T-cell (primary cell): ENCODE measurements at regions of chr2 and their contacts with region 1.

Region 1: DNA sequence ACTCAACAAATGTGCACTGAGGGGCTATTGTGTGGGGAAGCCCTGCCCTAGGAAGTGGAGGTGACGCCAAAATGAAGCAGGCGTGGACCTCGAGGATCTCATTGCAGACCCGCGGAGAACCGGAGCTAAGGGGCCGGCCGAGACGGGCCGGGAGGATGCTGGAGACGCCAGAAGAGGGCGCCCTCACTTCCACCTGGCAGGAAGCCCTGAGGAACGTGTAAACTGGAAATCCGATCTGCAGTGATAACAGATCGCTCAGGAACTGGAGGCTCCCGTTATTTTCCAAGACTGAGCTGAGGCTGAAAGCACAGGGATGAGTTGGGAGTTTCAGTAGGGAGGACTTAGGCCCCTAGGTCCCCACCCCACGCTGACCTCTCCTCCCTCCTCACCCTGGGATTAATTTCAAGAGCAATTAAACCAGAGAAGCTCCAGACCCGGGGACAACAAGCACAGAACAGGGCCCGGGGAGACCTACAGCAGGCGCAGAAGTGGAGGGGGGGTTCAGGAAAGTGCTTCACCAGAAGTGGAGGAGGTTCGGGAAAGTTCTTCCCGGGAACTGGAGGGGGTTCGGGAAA is 7.7 kb upstream of the COL6A3 start:
- DNase-seq: peak; percentile 25 to 89 (median 72)
- ATAC-seq: peak; percentile 89 to 95 (median 91)
- H3K4me3 ChIP-seq: peak overlapping the region in 1 of 2 donors; percentile 29
- H3K4me3 Mint-ChIP-seq: peak overlapping the region; percentile 37 to 75 (median 53)
- H3K27ac ChIP-seq: no peak overlapping the region
- H3K27ac Mint-ChIP-seq: peak overlapping the region; percentile 50 to 59
- H3K4me1 ChIP-seq: peaks cover 3 to 16% of the 10 kb centered on the region in 2 experiments
- H3K4me1 Mint-ChIP-seq: peaks cover 27 to 48% (median 28%) of the 10 kb centered on the region in 3 donors
- H3K27me3 ChIP-seq: peaks cover 0 to 5% of the 10 kb centered on the region in 2 experiments
- H3K27me3 Mint-ChIP-seq: no peaks in the 10 kb centered on the region

Region 2: GRCh38 chr2:237434866-237435311 is 13.3 kb after region 1 on chr2:
- CTCF ChIA-PET with region 1: interaction called, 22 to 23 read pairs
- POLR2A ChIA-PET with region 1: no interaction called
- DNase-seq: peak; percentile 42 to 79 (median 67)
- ATAC-seq: peak; percentile 63 to 76 (median 76)
- H3K4me3 ChIP-seq: peak overlapping the region in 1 of 2 donors; percentile 3
- H3K4me3 Mint-ChIP-seq: peak overlapping the region; percentile 71 to 84 (median 74)
- H3K27ac ChIP-seq: peak overlapping the region; percentile 75
- H3K27ac Mint-ChIP-seq: peak overlapping the region; percentile 99
- H3K4me1 ChIP-seq: peaks cover 60 to 77% of the 10 kb centered on the region in 2 experiments
- H3K4me1 Mint-ChIP-seq: peaks cover 83 to 90% (median 85%) of the 10 kb centered on the region in 3 donors
- H3K27me3 ChIP-seq: no peaks in the 10 kb centered on the region
- H3K27me3 Mint-ChIP-seq: no peaks in the 10 kb centered on the region